Colonic mucosa (tissue), 4 donors: ENCODE measurements at regions of chr10 and their contacts with region 1.

Region 1: DNA sequence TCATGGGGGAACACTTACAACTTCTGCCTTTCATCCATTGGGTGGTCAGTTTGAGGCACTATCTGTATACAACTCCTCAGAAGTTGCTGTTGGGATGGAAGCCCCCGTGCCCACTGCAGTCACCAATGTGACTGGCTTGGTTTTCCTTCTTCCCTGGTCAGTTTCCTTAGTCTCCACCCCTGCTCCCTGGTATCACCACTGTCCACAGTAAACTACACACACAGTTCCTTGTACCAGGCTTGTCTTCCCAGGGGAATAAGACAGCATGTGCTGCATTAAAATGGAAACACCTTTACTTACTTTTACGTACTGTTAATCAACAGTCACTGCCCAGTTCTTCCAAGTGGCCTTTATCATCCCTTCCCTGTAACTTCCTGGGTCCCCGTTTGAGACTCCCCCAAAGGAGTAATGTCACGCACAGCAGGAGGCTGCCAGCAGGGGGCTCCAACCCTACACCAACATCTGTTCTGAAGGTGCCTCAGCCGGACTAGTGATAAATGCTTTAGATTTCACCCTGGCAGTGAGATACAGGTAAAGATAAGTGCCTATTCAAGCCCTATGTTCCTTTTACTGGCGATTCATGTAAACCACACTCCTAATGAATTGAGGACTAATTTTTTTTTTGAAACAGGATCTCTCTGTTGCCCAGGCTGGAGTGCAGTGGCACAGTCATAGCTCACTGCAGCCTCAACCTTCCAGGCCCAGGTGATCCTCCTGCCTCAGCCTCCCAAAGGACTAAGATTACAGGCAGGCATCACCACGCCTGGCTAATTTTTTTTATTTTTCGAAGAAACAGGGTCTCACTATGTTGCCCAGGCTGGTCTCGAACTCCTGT is 45.3 kb upstream of the PIK3AP1 start:
- DNase-seq: peak; percentile 89
- H3K4me3 ChIP-seq: no peak overlapping the region
- H3K27ac ChIP-seq: peak overlapping the region; percentile 45
- H3K4me1 ChIP-seq: no peaks in the 10 kb centered on the region
- H3K27me3 ChIP-seq: no peaks in the 10 kb centered on the region
- CTCF ChIP-seq: peak; percentile 87

Region 2: GRCh38 chr10:96618653-96619052 is 147.0 kb before region 1 on chr10:
- intact Hi-C with region 1: no loop called
- DNase-seq: peak; percentile 57
- H3K4me3 ChIP-seq: no peak overlapping the region
- H3K27ac ChIP-seq: no peak overlapping the region
- H3K4me1 ChIP-seq: peaks cover 2% of the 10 kb centered on the region
- H3K27me3 ChIP-seq: no peaks in the 10 kb centered on the region
- CTCF ChIP-seq: no peak

Region 3: GRCh38 chr10:96830511-96831199 is 65.0 kb after region 1 on chr10:
- intact Hi-C with region 1: loop called (anchors 1 kb)
- DNase-seq: peak; percentile 92
- H3K4me3 ChIP-seq: no peak overlapping the region
- H3K27ac ChIP-seq: peak overlapping the region; percentile 95
- H3K4me1 ChIP-seq: peaks cover 5% of the 10 kb centered on the region
- H3K27me3 ChIP-seq: no peaks in the 10 kb centered on the region
- CTCF ChIP-seq: peak; percentile 93

Region 4: GRCh38 chr10:97037365-97038361 is 272.0 kb after region 1 on chr10:
- intact Hi-C with region 1: loop called (anchors 10 kb)
- DNase-seq: peak; percentile 89
- H3K4me3 ChIP-seq: peak overlapping the region; percentile 37
- H3K27ac ChIP-seq: no peak overlapping the region
- H3K4me1 ChIP-seq: no peaks in the 10 kb centered on the region
- H3K27me3 ChIP-seq: no peaks in the 10 kb centered on the region
- CTCF ChIP-seq: peak; percentile 89